PC-3 (cell line): ENCODE measurements at regions of chr11 and their contacts with region 1.

Region 1: GRCh38 chr11:61332797-61333549 is at the starts of genes DDB1 and TKFC:
- DNase-seq: peak; percentile 97
- ATAC-seq: peak; percentile 91
- H3K4me3 ChIP-seq: peak within 1 kb of the TSS; percentile 95
- H3K27ac ChIP-seq: peak within 1 kb of the TSS; percentile 52
- H3K4me1 ChIP-seq: peaks cover 30% of the 10 kb centered on the region
- H3K27me3 ChIP-seq: no peaks in the 10 kb centered on the region
- CTCF ChIP-seq: no peak
- total RNA-seq, gene DDB1: 450 and 451 TPM in 2 replicates
- total RNA-seq, gene TKFC: 56.9 and 88.5 TPM in 2 replicates

Region 2: GRCh38 chr11:61254403-61255025 is 78.5 kb before region 1 on chr11:
- CTCF ChIA-PET with region 1: no interaction called
- POLR2A ChIA-PET with region 1: interaction called, 3 read pairs
- intact Hi-C with region 1: loop called (anchors 10 kb)
- DNase-seq: peak; percentile 79
- ATAC-seq: peak; percentile 97
- H3K4me3 ChIP-seq: no peak overlapping the region
- H3K27ac ChIP-seq: no peak overlapping the region
- H3K4me1 ChIP-seq: no peaks in the 10 kb centered on the region
- H3K27me3 ChIP-seq: peaks cover 14% of the 10 kb centered on the region
- CTCF ChIP-seq: peak; percentile 91

Region 3: DNA sequence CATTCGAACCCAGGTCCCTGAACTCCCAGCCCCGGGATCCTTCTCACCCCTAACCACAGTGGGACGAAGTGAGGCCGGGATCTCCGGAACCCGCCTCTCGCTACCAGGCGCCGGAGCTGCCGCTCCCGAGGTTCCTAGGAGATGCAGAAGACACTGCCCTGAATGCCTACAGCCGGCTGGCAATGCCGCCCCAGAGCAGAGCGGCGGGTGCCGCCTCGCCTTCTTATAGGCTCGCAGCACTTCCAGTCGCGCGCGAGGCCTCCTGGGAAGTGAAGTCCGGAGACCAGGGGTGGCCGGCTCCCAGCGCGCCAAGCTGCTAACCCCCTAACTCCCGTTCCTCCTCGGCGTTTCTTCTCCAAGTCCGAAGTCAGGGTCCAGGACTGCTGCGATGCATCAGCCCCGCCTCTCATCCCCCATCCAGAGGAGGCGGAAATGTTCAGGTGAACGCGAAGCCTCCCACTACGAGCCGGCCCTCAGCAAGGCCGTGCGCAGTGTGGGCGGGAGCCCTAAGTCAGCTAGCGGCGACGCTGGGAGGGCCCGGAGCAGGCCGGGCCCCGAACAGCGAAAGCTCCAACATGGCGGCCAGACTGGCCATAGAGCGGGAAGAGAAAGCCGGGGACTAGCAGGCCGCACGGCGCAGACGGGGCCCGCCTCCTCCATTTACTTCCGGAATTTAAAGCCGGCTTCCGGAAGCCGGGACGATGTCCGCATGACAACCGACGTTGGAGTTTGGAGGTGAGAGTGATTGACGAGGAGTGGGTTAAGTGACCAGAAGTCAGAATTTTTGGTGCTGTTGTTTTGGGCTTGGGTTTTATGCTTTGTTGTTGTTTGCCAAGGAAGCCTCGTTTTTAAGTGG is 28.9 kb after region 1 on chr11 and contains the starts of genes CYB561A3 and TMEM138:
- CTCF ChIA-PET with region 1: interaction called, 18 read pairs
- POLR2A ChIA-PET with region 1: no interaction called
- intact Hi-C with region 1: loop called (anchors 2 kb)
- DNase-seq: peak; percentile 97
- ATAC-seq: peak; percentile 91
- H3K4me3 ChIP-seq: peak within 1 kb of the TSS; percentile 79
- H3K27ac ChIP-seq: peak within 1 kb of the TSS; percentile 93
- H3K4me1 ChIP-seq: peaks cover 17% of the 10 kb centered on the region
- H3K27me3 ChIP-seq: no peaks in the 10 kb centered on the region
- CTCF ChIP-seq: no peak
- total RNA-seq, gene CYB561A3: 51.2 and 58.2 TPM in 2 replicates
- total RNA-seq, gene TMEM138: 39.8 and 40.7 TPM in 2 replicates

Region 4: DNA sequence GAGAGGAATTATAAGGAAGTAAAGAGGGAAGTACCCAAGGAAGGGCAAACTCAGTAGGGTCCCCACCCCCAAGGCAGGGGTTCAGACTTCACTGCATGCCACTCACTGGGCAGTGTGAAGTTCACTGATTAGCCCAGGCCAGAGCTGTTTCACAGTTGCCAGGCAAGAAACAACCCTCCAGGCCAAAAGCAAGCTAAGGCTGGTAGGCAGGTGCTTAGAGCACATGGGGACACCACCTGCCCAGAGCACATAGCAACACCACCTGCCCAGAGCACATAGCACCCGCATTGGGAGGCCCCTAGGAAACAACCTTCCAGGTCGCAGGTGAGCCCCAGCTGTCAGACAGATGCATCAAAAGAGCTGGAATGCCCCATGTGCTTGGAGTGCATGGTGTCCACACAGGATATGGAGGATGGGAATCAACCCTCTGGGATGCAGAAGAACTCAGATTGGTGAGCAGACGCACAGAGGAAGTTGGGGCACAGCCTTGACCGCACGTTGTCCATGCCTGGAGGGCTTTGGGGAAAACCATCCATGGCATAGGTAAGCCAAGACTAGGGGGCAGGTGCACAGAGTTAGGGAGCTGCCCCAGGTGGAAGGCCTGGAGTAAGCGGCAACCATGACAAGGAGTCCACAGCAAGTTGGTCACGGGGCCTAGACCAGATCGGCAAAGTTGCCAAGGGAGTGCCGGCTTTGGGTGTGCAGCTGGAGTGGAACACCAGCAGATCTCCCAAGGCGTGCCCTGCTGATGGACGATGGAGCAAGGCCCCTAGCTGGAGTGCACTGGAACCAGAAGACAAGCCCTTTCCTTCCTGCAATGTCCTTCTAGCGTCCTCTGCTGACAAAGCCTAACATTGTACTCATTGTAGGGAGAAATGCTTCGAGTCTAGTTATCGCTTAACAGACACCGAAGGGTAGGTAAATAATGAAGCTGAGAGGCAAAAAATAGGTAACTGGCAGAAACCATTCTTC is 51.6 kb after region 1 on chr11:
- CTCF ChIA-PET with region 1: interaction called, 63 read pairs
- POLR2A ChIA-PET with region 1: interaction called, 4 read pairs
- intact Hi-C with region 1: loop called (anchors 1 kb)
- DNase-seq: peak; percentile 41
- ATAC-seq: peak; percentile 31; the same call in 1 of the 2 replicates
- H3K4me3 ChIP-seq: no peak overlapping the region
- H3K27ac ChIP-seq: no peak overlapping the region
- H3K4me1 ChIP-seq: no peaks in the 10 kb centered on the region
- H3K27me3 ChIP-seq: no peaks in the 10 kb centered on the region
- CTCF ChIP-seq: peak; percentile 25; the same call in 1 of the 2 replicates

Region 5: DNA sequence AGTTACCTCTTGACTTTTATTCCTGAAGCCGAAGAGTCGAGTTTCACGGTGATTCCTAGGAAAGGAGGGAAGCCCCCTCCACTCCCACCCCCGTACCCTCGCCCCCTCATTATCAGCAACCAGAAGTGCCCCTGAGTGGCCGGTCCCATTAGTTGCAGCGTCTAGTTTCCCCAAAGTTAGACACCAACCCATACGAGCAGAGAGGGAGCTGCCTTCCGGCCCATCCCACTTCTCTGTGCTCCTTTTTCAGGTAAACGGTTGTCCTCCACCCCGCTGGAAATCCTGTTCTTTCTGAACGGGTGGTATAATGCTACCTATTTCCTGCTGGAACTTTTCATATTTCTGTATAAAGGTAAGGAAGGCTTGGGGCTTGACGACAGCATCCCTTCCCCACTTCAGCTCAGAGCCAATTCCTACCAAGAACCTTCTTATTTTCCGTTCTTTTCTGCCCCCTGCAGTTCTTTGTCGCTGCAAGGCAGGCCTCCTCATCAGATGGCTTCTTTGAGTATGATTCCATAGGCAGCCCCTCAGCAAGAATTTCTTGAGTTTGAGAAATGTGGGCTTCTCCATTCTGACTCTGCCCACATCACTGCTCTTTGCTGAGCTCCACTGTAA is 60.1 kb after region 1 on chr11:
- CTCF ChIA-PET with region 1: interaction called, 18 read pairs
- POLR2A ChIA-PET with region 1: interaction called, 5 read pairs
- intact Hi-C with region 1: loop called (anchors 2 kb)
- DNase-seq: peak; percentile 53
- ATAC-seq: peak; percentile 45
- H3K4me3 ChIP-seq: peak overlapping the region; percentile 94
- H3K27ac ChIP-seq: peak overlapping the region; percentile 59
- H3K4me1 ChIP-seq: peaks cover 14% of the 10 kb centered on the region
- H3K27me3 ChIP-seq: no peaks in the 10 kb centered on the region
- CTCF ChIP-seq: peak; percentile 59